Activated CD8-positive, alpha-beta T cell treated with anti-CD3 and anti-CD28 coated beads, Interleukin-2, amount 10 ng/mL, durations not matched to agents 7 days and 5 days (primary cell): ENCODE measurements at regions of chr3 and their contacts with region 1.

Region 1: GRCh38 chr3:184513276-184514170 is 48.1 kb upstream of the EPHB3 start:
- DNase-seq: peak; percentile 87
- ATAC-seq: peak; percentile 99
- H3K4me3 Mint-ChIP-seq: peak overlapping the region; percentile 26
- H3K27ac Mint-ChIP-seq: no peak overlapping the region
- H3K4me1 Mint-ChIP-seq: peaks cover 10% of the 10 kb centered on the region
- H3K27me3 Mint-ChIP-seq: peaks cover 52% of the 10 kb centered on the region

Region 2: GRCh38 chr3:184209146-184209923 is 304.2 kb before region 1 on chr3:
- CTCF ChIA-PET with region 1: no interaction called
- POLR2A ChIA-PET with region 1: no interaction called
- DNase-seq: no peak
- ATAC-seq: no peak
- H3K4me3 Mint-ChIP-seq: no peak overlapping the region
- H3K27ac Mint-ChIP-seq: no peak overlapping the region
- H3K4me1 Mint-ChIP-seq: no peaks in the 10 kb centered on the region
- H3K27me3 Mint-ChIP-seq: peaks cover 14% of the 10 kb centered on the region

Region 3: DNA sequence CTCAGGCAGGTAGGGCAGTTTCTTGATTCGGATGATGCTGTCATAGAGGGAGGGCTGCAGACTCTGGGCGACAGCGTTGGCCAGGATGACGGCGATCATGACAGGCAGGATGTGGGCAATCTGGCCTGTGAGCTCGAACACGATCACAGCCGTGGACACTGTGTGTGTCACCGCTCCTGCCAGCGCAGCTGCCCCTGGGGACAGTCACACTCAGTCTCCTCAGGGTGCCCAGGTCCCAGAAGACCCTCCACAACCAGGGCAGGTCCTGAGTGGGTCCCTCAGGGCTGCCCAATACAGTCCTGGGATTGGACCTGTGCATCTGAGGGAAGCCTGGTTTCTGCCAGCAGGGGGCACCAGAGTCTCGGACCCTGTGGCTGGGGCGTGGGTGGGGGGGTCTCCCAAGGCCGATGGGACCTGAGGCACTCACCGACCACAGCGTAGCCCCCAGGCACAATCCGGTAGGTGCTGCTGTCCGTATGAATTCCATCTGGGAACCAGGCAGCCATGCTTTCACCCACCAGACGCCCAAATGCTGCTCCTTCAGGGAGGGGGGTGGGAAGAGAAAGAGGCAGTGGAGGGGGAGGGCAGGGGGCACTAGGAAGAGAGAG is 159.3 kb before region 1 on chr3:
- CTCF ChIA-PET with region 1: interaction called, 11 read pairs
- POLR2A ChIA-PET with region 1: no interaction called
- DNase-seq: peak; percentile 63
- ATAC-seq: peak; percentile 73
- H3K4me3 Mint-ChIP-seq: no peak overlapping the region
- H3K27ac Mint-ChIP-seq: peak overlapping the region; percentile 63
- H3K4me1 Mint-ChIP-seq: peaks cover 6% of the 10 kb centered on the region
- H3K27me3 Mint-ChIP-seq: no peaks in the 10 kb centered on the region

Region 4: DNA sequence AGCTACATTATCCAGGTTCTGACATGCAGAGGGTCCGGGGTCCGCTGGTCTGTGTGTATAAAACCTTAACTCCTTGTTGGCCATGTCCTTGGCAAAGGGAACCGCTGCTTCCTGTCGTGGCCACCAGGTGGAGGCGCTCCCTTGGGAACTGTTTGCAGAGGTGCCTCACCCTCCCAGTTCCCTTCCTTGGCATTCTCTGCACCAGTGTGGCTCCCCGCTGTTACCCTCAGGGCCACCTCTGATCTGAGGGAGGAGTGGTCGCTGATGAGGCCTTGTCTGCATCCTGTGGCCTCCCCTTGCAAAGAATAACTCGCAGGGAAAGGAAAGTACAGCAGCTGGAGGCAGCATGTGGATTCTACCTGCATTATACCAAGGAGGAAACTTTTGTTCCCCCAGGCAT is 44.1 kb before region 1 on chr3:
- CTCF ChIA-PET with region 1: interaction called, 21 read pairs
- POLR2A ChIA-PET with region 1: interaction called, 3 read pairs
- DNase-seq: peak; percentile 33
- ATAC-seq: peak; percentile 48
- H3K4me3 Mint-ChIP-seq: no peak overlapping the region
- H3K27ac Mint-ChIP-seq: no peak overlapping the region
- H3K4me1 Mint-ChIP-seq: peaks cover 9% of the 10 kb centered on the region
- H3K27me3 Mint-ChIP-seq: peaks cover 22% of the 10 kb centered on the region

Region 5: GRCh38 chr3:184523825-184524615 is 10.5 kb after region 1 on chr3:
- CTCF ChIA-PET with region 1: interaction called, 27 read pairs
- POLR2A ChIA-PET with region 1: interaction called, 4 read pairs
- DNase-seq: peak; percentile 33
- ATAC-seq: peak; percentile 54
- H3K4me3 Mint-ChIP-seq: no peak overlapping the region
- H3K27ac Mint-ChIP-seq: no peak overlapping the region
- H3K4me1 Mint-ChIP-seq: peaks cover 16% of the 10 kb centered on the region
- H3K27me3 Mint-ChIP-seq: peaks cover 38% of the 10 kb centered on the region

Region 6: DNA sequence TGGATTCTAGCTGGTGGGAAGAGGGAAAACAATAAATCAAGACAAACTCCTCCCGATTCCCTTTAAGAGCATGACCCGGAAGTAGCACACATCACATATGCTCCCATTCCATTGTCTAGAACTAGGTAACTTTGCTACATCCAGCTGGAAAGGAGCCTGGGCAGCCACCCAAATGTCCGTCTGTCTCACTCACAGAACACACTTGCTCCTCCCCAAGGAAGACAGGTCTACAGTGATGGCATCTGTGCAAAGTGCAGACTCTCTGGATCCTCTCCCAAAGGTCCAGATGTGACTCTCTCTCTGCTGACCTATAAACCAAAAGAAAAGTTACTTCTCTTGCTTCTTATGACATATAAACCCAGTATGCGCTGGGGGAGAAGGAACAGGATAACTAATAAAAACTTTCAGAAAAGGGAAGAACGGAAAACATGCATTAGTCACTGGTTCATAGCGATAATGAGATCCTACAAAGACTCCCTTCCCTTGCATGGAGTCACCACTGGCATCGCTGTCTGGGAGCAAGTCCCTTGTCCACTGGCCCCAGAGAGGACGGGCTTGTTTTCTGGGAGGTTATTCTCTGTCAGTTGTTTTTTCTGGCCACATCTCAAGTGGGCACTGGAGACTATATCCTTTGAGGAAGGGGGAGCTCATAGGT is 18.2 kb after region 1 on chr3:
- CTCF ChIA-PET with region 1: interaction called, 27 read pairs
- POLR2A ChIA-PET with region 1: no interaction called
- DNase-seq: no peak
- ATAC-seq: no peak
- H3K4me3 Mint-ChIP-seq: no peak overlapping the region
- H3K27ac Mint-ChIP-seq: no peak overlapping the region
- H3K4me1 Mint-ChIP-seq: no peaks in the 10 kb centered on the region
- H3K27me3 Mint-ChIP-seq: peaks cover 23% of the 10 kb centered on the region

Region 7: GRCh38 chr3:184543843-184544512 is 30.5 kb after region 1 on chr3:
- CTCF ChIA-PET with region 1: interaction called, 33 read pairs
- POLR2A ChIA-PET with region 1: no interaction called
- DNase-seq: peak; percentile 85
- ATAC-seq: peak; percentile 80
- H3K4me3 Mint-ChIP-seq: no peak overlapping the region
- H3K27ac Mint-ChIP-seq: no peak overlapping the region
- H3K4me1 Mint-ChIP-seq: peaks cover 5% of the 10 kb centered on the region
- H3K27me3 Mint-ChIP-seq: peaks cover 24% of the 10 kb centered on the region

Region 8: GRCh38 chr3:184561061-184561912 is 47.8 kb after region 1 on chr3 and contains the start of gene EPHB3:
- CTCF ChIA-PET with region 1: no interaction called
- POLR2A ChIA-PET with region 1: no interaction called
- DNase-seq: peak; percentile 93
- ATAC-seq: peak; percentile 88
- H3K4me3 Mint-ChIP-seq: peak within 1 kb of the TSS; percentile 48
- H3K27ac Mint-ChIP-seq: no peak within 1 kb of the TSS
- H3K4me1 Mint-ChIP-seq: peaks cover 21% of the 10 kb centered on the region
- H3K27me3 Mint-ChIP-seq: peaks cover 47% of the 10 kb centered on the region
- total RNA-seq, gene EPHB3: 0.11 to 0.13 TPM